ENCODE measurements at regions of chr18 and their contacts with region 1.

Region 1: DNA sequence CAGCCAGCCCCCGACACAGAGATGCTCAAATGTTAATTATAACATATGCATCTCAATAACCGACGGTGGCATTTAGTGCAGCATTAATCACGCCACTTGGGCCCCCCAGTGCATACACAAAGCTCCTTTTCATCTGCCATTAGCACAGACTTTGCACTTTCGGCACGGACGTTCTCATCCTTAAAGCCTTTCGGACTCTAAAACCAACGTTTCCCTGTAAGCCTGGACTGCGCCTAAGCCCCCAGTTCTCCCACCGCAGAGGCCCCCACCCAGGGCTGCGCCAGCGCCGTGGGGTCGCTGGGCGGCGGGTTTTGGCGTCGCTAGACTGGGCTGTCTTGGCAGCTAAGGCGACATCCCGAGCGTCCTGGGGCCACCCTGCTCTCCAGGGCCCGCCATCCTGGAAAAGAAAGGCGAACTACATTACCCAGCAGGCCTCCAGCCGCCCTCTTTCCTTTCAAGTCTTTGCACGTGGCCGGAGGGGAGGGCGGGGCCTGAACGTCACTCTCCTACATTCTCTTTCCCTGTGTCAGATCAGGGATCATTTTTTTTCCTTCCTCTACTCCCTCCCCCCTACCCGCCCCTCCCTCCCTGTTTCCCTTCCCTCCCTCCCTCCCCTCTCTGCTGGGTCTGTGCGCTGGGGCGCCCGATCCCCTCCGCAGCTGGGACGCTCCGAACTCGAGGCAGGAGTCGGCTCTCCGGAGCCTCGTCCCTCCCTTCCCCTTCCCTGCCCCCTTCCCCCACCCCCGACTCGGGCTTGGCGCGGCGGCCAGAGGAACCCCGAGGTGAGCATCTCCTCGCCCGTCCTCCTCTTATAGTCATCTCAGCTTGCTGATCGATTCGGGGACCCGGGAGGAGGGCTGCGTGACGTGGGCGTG is at the start of gene CTIF:
- DNase-seq: peak; percentile 89 to 91
- H3K4me3 ChIP-seq: peak within 1 kb of the TSS; percentile 97
- H3K27ac ChIP-seq: no peak within 1 kb of the TSS
- H3K4me1 ChIP-seq: peaks cover 30% of the 10 kb centered on the region
- H3K27me3 ChIP-seq: no peaks in the 10 kb centered on the region
- CTCF ChIP-seq: no peak
- total RNA-seq, gene CTIF: 17.0 and 26.2 TPM in 2 replicates

Region 2: GRCh38 chr18:48488388-48488850 is 50.3 kb before region 1 on chr18:
- CTCF ChIA-PET with region 1: interaction called, 4 read pairs
- POLR2A ChIA-PET with region 1: interaction called, 4 read pairs
- intact Hi-C with region 1: loop called (anchors 2 kb)
- DNase-seq: peak; percentile 79 to 95
- H3K4me3 ChIP-seq: no peak overlapping the region
- H3K27ac ChIP-seq: no peak overlapping the region
- H3K4me1 ChIP-seq: peaks cover 46% of the 10 kb centered on the region
- H3K27me3 ChIP-seq: no peaks in the 10 kb centered on the region
- CTCF ChIP-seq: no peak

Region 3: GRCh38 chr18:48580782-48581181 is 42.0 kb after region 1 on chr18:
- CTCF ChIA-PET with region 1: no interaction called
- POLR2A ChIA-PET with region 1: no interaction called
- intact Hi-C with region 1: no loop called
- DNase-seq: no peak
- H3K4me3 ChIP-seq: no peak overlapping the region
- H3K27ac ChIP-seq: no peak overlapping the region
- H3K4me1 ChIP-seq: no peaks in the 10 kb centered on the region
- H3K27me3 ChIP-seq: no peaks in the 10 kb centered on the region
- CTCF ChIP-seq: no peak

Region 4: GRCh38 chr18:48607056-48607984 is 68.6 kb after region 1 on chr18:
- CTCF ChIA-PET with region 1: no interaction called
- POLR2A ChIA-PET with region 1: no interaction called
- intact Hi-C with region 1: no loop called
- DNase-seq: peak in 1 of 2 experiments; percentile 36
- H3K4me3 ChIP-seq: no peak overlapping the region
- H3K27ac ChIP-seq: no peak overlapping the region
- H3K4me1 ChIP-seq: no peaks in the 10 kb centered on the region
- H3K27me3 ChIP-seq: no peaks in the 10 kb centered on the region
- CTCF ChIP-seq: no peak

Region 5: DNA sequence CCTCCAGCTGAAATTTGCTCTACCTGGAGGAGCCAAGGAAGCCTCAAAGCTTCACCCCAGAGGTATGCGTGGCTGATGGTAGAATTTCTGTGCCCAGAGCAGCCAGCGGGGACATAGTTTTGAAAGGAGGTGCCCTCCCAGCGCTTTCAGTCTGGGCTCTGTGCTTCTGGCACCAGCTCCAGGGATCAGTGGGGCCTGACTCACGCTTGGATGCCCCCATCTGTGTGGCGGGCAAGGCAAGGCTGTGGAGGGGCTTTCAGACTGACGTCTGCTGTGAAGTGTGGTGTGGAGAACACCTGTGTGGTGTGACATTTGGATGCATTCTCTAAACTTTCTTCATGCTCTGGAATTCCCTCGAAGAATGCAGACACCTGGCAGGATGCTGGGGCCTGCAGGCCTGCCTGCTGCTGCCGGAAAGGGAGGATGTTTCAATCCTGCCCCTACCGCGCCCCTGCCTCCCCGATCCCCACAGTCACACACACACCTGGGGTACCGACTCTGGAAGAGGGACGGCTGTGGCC is 84.2 kb after region 1 on chr18:
- CTCF ChIA-PET with region 1: no interaction called
- POLR2A ChIA-PET with region 1: no interaction called
- intact Hi-C with region 1: loop called (anchors 2 kb)
- DNase-seq: peak; percentile 54 to 79
- H3K4me3 ChIP-seq: no peak overlapping the region
- H3K27ac ChIP-seq: peak overlapping the region; percentile 61
- H3K4me1 ChIP-seq: peaks cover 35% of the 10 kb centered on the region
- H3K27me3 ChIP-seq: no peaks in the 10 kb centered on the region
- CTCF ChIP-seq: no peak

Region 6: GRCh38 chr18:48859311-48860268 is 320.8 kb after region 1 on chr18:
- CTCF ChIA-PET with region 1: no interaction called
- POLR2A ChIA-PET with region 1: no interaction called
- intact Hi-C with region 1: no loop called
- DNase-seq: no peak
- H3K4me3 ChIP-seq: no peak overlapping the region
- H3K27ac ChIP-seq: no peak overlapping the region
- H3K4me1 ChIP-seq: no peaks in the 10 kb centered on the region
- H3K27me3 ChIP-seq: no peaks in the 10 kb centered on the region
- CTCF ChIP-seq: no peak

Measured in PC-9 (cell line).